ENCODE measurements at regions of chr12 and their contacts with region 1.

Region 1: DNA sequence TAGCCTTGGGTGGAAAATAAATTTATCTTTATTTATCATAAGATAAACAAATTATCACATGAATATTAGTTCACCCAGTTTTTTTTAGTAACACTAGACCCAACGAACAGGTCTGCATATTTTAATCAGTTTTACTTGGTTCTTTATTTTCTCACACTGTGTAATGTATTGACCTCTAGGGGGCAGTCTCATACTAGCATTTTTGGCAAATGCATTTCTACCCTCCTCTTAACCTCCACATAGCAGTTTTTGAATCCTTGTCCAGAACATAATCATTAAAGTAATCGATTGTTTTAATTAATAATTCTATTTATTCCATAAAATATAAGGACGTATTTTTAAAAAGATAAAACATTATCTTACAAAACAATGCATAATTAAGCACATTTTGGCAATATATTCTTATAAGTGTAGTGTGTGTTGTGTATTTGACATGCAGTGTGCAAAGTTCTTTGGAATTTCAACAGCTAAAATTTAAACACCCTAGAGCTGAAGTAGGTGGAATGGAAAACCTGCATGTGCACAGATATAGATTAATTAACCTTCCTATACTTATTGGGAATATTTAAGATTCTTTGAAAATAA is 31.6 kb upstream of the PTPRQ start:
- DNase-seq: no peak
- H3K4me3 ChIP-seq: no peak overlapping the region
- H3K27ac ChIP-seq: no peak overlapping the region
- H3K4me1 ChIP-seq: peaks cover 0 to 6% (median 0%) of the 10 kb centered on the region in 4 donors
- H3K27me3 ChIP-seq: no peaks in the 10 kb centered on the region
- CTCF ChIP-seq: peak; percentile 67 to 81 (median 73)
- EP300 ChIP-seq: no peak
- POLR2A ChIP-seq: no peak

Region 2: DNA sequence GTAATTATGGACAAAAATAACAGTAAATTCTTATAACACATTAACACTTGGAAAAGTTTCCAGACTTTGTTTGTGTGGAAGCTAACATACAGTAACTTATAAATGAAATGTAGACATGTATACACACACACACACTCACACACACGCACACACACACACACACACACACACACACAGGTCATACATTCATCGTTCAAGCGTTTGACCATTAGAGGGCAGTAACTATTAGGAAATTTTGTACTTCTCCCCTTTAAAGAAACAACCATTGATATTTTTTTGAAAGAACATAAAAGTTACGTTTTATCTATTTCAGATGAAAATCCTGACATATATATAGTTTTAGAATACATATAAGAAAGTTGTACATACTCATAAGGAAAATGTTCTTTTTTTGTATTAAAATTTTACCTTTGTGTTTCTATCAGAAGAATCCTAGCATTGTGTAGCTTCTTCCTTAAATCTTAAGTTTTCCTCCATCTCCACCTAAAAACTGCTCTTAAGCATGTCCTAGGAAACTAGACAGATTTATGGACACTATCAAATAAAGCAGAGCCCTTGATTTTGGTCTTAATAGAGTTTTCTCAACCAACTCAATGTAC is 60.5 kb after region 1 on chr12:
- intact Hi-C with region 1: loop called (anchors 10 kb)
- DNase-seq: no peak
- H3K4me3 ChIP-seq: no peak overlapping the region
- H3K27ac ChIP-seq: no peak overlapping the region
- H3K4me1 ChIP-seq: no peaks in the 10 kb centered on the region
- H3K27me3 ChIP-seq: no peaks in the 10 kb centered on the region
- CTCF ChIP-seq: peak; percentile 29 to 62 (median 49)
- EP300 ChIP-seq: no peak
- POLR2A ChIP-seq: no peak

Region 3: DNA sequence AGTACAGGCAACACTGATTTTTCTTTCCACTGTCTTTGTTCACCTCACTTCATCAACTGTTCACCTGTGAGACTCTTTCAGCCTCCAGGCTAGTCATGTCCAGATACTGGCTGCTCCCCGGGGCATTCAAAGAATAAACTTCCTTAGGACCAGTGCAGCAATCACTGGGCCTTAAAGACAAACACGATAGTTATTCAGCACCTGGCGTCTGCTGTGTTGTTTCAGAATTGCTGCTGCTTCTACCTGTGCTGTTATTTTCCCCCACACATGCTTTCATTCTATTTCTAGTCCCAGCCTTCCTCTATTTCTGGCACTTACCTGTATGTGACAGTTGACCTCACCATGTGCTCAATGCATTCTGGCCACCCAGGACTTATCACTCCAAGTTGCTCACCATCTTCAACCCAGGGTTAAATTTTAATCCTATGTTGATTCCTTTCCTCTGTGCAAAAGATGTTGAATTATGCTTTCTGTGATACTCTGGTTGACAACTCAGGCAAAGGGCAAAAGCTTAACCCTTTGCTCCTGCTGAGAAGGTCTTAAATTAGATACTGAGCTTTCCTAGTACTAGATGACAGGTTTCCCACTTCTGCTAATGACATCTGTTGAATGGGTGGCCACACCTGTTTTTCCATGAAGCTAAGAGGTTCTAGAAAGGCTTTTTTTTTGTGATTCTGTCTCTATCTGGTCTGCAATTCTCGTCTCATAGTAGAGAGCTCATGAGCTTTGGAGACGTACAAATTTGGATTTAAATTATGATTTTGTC is 72.9 kb after region 1 on chr12:
- intact Hi-C with region 1: no loop called
- DNase-seq: no peak
- H3K4me3 ChIP-seq: no peak overlapping the region
- H3K27ac ChIP-seq: no peak overlapping the region
- H3K4me1 ChIP-seq: peaks cover 0 to 11% (median 0%) of the 10 kb centered on the region in 4 donors
- H3K27me3 ChIP-seq: no peaks in the 10 kb centered on the region
- CTCF ChIP-seq: no peak
- EP300 ChIP-seq: no peak
- POLR2A ChIP-seq: no peak

Region 4: GRCh38 chr12:80763874-80764273 is 351.4 kb after region 1 on chr12:
- intact Hi-C with region 1: loop called (anchors 2 kb)
- DNase-seq: no peak
- H3K4me3 ChIP-seq: no peak overlapping the region
- H3K27ac ChIP-seq: no peak overlapping the region
- H3K4me1 ChIP-seq: peaks cover 0 to 7% (median 2%) of the 10 kb centered on the region in 4 donors
- H3K27me3 ChIP-seq: no peaks in the 10 kb centered on the region
- CTCF ChIP-seq: peak; percentile 57 to 65 (median 64)
- EP300 ChIP-seq: no peak
- POLR2A ChIP-seq: no peak

Measured in esophagus muscularis mucosa (tissue), 4 donors.